ENCODE measurements at regions of chr19 and their contacts with region 1.

Region 1: GRCh38 chr19:56252699-56253422 is 19.7 kb upstream of the EDDM13 start:
- DNase-seq: peak; percentile 88
- ATAC-seq: peak; percentile 77

Region 2: GRCh38 chr19:56211718-56212117 is 41.1 kb before region 1 on chr19:
- intact Hi-C with region 1: no loop called
- DNase-seq: no peak
- ATAC-seq: no peak

Region 3: DNA sequence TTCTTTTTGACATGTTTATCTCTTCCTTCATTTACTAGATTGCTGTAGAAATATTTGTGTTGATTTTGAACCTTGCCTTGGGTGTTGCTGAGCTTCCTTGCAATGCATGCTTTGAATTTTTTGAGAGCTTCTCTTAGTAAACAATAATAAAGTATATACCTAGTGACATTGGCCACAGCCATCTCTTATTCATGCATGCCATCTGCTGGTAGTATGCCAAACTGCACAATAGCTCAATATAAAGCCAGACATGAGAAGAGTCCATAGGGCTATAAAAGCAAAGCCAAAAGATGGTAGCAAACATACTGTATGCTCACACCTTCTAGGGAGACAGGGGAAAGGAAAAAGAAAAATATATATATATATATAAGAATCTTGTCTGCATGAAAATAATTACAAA is 80.6 kb after region 1 on chr19:
- intact Hi-C with region 1: loop called (anchors 1 kb)
- DNase-seq: no peak
- ATAC-seq: no peak

Region 4: DNA sequence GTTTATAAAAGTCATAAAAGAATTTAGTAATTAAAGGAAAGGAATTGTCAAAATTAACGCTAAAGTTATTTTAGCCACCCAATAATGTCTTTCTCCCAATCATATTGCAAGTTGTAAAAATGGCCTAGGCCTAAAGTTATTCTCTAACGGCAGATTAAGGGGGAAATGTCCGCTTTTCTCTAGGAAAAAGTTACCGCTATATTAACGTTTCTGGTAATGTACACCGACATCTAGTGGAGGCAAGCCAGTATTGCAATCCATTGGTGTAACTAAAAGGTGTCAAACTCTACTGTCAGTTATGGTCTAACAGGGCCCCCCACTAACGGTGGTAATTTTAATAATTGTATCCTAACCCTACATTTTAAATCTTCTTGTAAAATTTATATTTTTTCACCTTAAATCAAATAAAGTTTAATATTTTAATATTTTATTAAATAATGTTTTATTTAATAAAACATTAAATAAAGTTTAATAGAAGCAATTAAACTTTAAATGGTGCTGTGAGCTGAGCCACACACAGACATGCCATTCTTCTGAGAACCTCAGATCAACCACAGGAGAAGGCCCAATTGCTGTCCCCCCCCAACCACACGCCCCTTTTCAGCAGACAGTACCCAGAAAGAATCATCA is 97.7 kb after region 1 on chr19:
- intact Hi-C with region 1: loop called (anchors 5 kb)
- DNase-seq: no peak
- ATAC-seq: no peak